ENCODE measurements at regions of chr18 and their contacts with region 1.

Region 1: GRCh38 chr18:8704361-8705279 is 736 bp upstream of the MTCL1 start:
- DNase-seq: peak; percentile 68 to 93 (median 84)
- H3K4me3 ChIP-seq: peak overlapping the region; percentile 51 to 92 (median 77)
- H3K27ac ChIP-seq: peak overlapping the region; percentile 58 to 96 (median 92)
- H3K27me3 ChIP-seq: no peaks in the 10 kb centered on the region
- CTCF ChIP-seq: peak in 13 of 56 donors; percentile 5 to 46 (median 16)

Region 2: DNA sequence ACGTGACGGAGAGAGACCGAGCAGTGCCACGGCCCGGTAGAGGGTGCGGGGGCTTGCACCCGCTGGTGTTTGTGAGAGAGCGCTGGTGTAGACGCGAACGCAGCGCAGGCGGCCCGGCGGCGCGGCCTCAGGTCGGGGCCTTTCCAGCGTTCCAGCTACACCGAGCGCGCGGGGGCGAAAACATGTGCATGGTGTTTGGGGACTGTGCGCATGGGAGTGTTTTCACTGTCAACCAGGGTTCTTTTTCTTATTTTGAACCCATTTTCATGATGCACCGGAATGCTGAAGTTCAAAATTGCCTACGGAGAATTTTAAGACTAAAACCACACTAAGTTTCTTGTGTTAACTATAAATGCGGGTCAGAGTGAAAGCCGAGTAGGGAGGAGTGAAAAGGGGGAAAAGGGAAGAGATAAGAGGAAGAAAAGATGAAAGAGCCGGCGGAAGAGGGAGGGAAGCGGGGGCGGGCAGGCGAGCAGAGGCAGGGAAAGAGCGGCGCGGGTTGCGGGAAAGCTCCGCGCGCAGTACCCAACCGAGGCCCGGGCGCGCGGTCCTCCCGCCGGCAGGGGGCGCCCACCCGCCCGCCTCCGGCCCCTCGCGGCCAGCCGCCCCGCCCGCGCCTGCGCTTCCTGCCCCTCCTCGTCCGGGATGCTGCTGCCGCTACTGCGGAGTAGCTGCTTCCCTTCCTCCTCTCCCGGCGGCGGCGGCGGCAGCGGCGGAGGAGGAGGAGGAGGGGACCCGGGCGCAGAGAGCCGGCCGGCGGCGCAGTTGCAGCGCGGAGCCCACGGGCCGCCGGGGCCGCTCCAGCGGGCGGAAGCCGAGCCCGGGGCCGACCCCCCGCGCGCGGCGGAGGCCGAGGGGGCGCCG is 95.6 kb before region 1 on chr18 and contains the start of gene RAB12:
- intact Hi-C with region 1: loop called (anchors 5 to 10 kb)
- DNase-seq: peak; percentile 58 to 92 (median 81)
- H3K4me3 ChIP-seq: peak within 1 kb of the TSS; percentile 67 to 99 (median 90)
- H3K27ac ChIP-seq: peak within 1 kb of the TSS in 55 of 59 donors; percentile 42 to 88 (median 76)
- H3K27me3 ChIP-seq: no peaks in the 10 kb centered on the region
- CTCF ChIP-seq: peak; percentile 20 to 91 (median 64)
- total RNA-seq, gene RAB12: 31.1 to 69.1 (median 52.0) TPM

Region 3: DNA sequence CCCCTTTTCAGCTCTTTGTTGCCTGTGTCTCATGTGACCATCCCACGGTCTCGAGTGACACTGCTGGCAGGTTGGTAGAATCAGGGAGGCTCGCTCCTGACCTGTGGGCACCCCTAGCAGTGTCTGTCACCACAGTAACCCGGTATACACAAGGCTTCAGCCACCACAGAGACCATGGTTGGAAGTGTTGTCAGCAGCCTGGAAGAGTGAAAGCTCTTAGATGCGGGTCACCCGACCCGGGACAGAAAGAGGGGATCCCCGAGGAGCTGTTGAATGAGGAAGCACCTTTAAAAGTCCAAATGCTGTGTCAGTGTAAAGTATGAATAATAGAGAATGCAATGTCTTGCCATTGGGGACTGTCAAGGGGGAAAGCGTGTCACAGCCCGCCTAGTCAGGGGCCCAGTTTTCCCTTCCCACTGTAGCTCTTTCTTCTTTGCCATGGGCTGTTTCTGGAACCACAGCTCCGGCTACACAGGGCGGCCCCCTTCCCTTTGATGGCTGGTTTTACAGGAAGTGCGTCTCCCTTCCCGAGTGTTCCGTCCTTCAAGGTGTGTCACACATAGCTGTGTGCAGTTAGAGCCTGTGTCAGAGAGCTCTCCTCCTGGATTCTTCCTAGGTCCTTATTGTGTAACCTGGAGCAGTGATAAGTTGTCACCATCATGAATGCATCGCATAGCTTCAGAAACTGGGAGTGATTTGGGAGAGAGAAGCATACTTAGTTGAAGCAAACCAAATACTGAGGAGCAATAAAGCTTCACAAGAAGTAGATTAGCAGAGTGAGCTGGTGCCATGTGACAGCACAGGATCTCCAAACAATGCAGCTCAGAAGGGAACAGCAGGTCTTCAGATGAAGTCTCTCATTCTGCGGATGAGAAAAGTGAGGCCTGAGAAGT is 82.1 kb after region 1 on chr18:
- intact Hi-C with region 1: loop called in 1 of 2 experiments (anchors 5 kb)
- DNase-seq: peak in 1 of 10 donors; percentile 13
- H3K4me3 ChIP-seq: peak overlapping the region in 2 of 59 donors; percentile 31 to 41
- H3K27ac ChIP-seq: peak overlapping the region in 30 of 59 donors; percentile 26 to 88 (median 65)
- H3K27me3 ChIP-seq: no peaks in the 10 kb centered on the region
- CTCF ChIP-seq: no peak

Region 4: DNA sequence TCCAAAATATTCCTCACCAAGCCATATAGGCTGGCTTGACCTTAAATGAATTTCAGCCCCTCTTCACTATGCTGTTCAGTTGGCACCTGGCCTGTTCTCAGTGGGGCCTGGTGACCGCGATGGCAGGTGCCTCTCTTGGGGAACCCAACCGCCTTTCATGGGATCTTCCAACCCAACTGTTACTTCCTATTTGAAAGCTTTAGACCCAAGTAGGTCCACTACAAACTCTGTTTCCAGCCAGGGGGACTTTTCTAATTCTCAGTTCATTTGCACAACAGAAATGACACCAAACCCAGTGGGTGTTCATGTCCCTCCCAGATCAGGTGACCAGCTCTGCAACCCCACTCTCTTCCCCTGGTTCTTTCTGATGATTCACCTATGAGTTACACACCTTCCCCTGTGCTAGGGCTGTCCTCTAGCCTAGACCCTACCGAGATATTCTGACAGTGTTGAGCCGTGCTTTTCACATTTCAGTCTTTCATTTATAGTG is 362.2 kb after region 1 on chr18:
- intact Hi-C with region 1: loop called in 1 of 2 experiments (anchors 10 kb)
- DNase-seq: no peak
- H3K4me3 ChIP-seq: no peak overlapping the region
- H3K27ac ChIP-seq: no peak overlapping the region
- H3K27me3 ChIP-seq: no peaks in the 10 kb centered on the region
- CTCF ChIP-seq: no peak

Region 5: DNA sequence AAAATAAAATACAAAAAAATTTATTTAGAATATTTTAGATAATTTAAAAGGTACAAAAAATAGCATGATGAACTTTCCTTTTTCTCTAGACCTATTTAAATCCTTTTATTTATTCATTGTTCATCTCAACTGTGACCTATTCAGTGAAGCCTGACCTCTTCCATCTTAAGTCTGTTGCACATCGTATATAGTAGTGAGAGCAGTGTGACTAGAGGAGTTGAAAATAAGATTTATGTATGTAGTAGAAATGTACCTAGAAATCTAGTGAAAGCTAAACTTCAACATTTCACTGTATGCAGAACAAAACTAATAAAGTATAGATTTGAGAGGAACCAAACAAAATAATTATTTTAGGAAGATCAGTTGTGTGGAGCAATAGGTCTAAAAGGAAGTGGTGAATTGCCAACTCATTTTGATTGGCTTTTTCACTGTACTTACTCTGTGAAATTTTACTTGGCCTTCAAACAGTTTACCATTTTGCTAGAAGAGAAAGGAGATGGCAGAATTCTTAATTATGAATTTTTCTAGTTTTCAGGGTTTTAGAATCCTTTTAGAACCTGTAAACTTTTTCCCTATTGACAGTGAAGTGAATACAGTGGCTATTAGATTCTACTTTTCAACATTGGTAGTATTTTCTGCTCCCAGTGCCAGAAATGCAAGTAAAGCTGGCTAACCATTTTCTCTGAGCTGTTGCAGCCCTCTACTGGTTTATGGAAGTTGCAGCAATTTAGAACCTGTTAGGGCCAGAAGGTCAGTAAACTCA is 443.0 kb after region 1 on chr18:
- intact Hi-C with region 1: loop called in 1 of 2 experiments (anchors 5 kb)
- DNase-seq: peak in 1 of 10 donors; percentile 35
- H3K4me3 ChIP-seq: no peak overlapping the region
- H3K27ac ChIP-seq: peak overlapping the region in 26 of 59 donors; percentile 1 to 53 (median 29)
- H3K27me3 ChIP-seq: no peaks in the 10 kb centered on the region
- CTCF ChIP-seq: peak; percentile 36 to 92 (median 75)

Measured in dorsolateral prefrontal cortex (tissue), 120 donors.